Naive thymus-derived CD4-positive, alpha-beta T cell (primary cell): ENCODE measurements at regions of chr4 and their contacts with region 1.

Region 1: DNA sequence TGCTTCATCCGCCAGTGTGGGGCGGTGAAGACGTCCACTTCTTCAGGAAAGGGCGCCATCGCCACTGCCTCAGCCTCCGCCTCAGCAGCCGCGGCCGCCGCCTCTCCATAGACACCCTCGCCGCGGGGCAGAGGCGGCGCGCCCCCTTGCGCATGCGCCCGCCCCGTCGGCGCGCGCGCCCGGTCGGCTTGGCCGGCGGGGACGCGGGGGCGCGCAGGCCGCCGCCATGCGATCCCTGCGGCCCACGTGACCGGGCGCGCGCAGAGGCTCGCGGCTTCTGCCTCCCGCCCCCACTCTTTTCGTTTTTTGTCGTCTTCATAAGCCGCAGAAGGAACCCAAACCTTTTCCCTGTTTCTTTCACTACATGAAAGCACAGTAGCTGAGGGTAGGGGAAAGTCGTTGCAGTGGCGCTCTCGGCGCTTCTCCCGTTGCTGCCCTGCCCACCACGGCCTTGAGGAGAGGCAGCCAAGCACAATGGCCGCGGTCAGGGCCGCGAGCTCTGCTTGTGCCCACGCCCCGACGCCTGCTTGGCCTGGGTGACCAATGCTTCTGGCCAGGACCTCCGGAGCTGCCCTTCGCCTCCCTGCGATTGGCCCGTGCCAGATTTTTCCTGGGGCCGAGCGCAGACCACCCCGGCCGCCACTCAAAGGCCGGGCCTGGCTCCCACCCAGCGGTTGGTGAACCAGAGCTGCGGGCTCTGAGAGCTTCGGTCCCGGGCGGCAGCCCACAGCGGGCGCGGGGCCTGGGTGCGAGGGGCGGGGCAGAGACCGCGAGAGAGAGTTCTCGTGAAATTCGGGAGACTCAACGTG is at the start of gene FBXL5:
- DNase-seq: peak; percentile 77 to 92 (median 87)
- ATAC-seq: peak; percentile 92
- H3K4me3 ChIP-seq: peak within 1 kb of the TSS; percentile 87
- H3K4me3 Mint-ChIP-seq: peak within 1 kb of the TSS; percentile 94 to 100 (median 97)
- H3K27ac ChIP-seq: peak within 1 kb of the TSS; percentile 90
- H3K27ac Mint-ChIP-seq: peak within 1 kb of the TSS; percentile 90 to 98 (median 98)
- H3K4me1 ChIP-seq: peaks cover 29% of the 10 kb centered on the region in 2 donors
- H3K4me1 Mint-ChIP-seq: peaks cover 21 to 49% (median 45%) of the 10 kb centered on the region in 7 donors
- H3K27me3 ChIP-seq: no peaks in the 10 kb centered on the region
- H3K27me3 Mint-ChIP-seq: peaks cover 0 to 2% (median 0%) of the 10 kb centered on the region in 5 donors
- total RNA-seq, gene FBXL5: 39.1 to 107 (median 57.4) TPM

Region 2: DNA sequence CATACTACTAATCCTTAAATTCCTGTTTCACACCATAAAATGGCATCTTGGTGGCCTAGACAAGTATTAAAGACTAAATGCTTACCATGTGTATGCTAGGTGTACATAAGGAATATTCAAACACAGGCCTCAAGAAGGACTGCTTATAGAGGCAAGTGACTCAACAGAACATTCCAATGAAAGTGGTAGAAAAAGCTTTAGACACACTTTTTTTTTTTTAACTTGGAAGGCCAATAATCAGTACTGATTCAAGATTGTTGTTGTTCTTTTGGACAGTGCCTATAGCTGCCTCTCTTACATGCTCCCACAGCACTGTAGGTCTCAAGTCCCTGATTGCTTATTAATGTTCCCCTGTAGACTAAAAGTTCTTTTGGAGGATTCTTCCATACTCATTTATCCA is 77.9 kb before region 1 on chr4:
- CTCF ChIA-PET with region 1: no interaction called
- POLR2A ChIA-PET with region 1: no interaction called
- intact Hi-C with region 1: no loop called
- DNase-seq: no peak
- ATAC-seq: no peak
- H3K4me3 ChIP-seq: no peak overlapping the region
- H3K4me3 Mint-ChIP-seq: no peak overlapping the region
- H3K27ac ChIP-seq: no peak overlapping the region
- H3K27ac Mint-ChIP-seq: no peak overlapping the region
- H3K4me1 ChIP-seq: no peaks in the 10 kb centered on the region
- H3K4me1 Mint-ChIP-seq: peaks cover 0 to 4% (median 0%) of the 10 kb centered on the region in 7 donors
- H3K27me3 ChIP-seq: no peaks in the 10 kb centered on the region
- H3K27me3 Mint-ChIP-seq: no peaks in the 10 kb centered on the region

Region 3: DNA sequence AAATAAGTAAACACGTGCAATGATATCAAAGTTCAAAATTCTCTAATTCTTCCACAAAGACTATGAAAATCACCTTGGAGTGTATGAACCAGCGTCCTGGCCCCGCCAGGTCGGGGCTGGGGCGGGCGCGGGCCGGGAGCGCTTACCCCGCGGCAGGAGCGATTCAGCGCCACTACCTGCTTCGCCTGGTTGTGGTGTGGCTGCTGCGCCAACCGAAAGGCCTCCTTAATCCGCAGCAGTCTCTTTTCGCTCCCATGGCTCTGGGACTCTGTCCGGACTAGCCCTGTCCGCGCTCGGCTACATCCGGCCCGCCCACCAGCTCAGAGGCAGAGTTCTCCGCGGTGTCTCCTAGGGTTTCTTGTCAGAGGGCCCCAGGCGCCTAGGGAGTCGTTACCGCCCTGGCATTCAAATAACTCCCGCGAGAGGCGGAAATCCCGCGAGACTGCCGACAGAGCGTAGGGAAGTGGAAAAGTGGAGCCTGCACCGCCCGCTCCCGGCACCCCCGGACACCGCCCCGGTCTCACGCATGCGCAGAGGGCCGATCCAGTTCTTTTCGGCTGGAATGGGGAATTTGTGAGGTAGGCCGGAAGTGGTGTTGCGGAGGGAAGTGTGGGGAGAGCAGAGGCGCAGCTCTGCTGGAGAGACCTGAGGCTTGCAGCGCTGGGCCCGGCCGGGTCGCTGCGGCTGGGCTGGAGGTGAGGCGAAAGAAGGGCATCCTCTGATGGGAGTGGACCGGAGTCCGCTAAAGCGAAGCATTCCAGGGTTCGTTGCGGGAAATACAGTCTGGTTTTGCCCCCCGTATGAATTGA is 26.0 kb after region 1 on chr4 and contains the start of gene FAM200B:
- CTCF ChIA-PET with region 1: interaction called, 3 read pairs
- POLR2A ChIA-PET with region 1: interaction called, 44 read pairs
- intact Hi-C with region 1: loop called (anchors 1 kb)
- DNase-seq: peak; percentile 87 to 100 (median 93)
- ATAC-seq: peak; percentile 98
- H3K4me3 ChIP-seq: peak within 1 kb of the TSS; percentile 78
- H3K4me3 Mint-ChIP-seq: peak within 1 kb of the TSS; percentile 88 to 99 (median 94)
- H3K27ac ChIP-seq: peak within 1 kb of the TSS; percentile 94
- H3K27ac Mint-ChIP-seq: peak within 1 kb of the TSS; percentile 89 to 100 (median 98)
- H3K4me1 ChIP-seq: peaks cover 5 to 11% of the 10 kb centered on the region in 2 donors
- H3K4me1 Mint-ChIP-seq: peaks cover 22 to 54% (median 42%) of the 10 kb centered on the region in 7 donors
- H3K27me3 ChIP-seq: no peaks in the 10 kb centered on the region
- H3K27me3 Mint-ChIP-seq: no peaks in the 10 kb centered on the region
- total RNA-seq, gene FAM200B: 10.6 to 42.8 (median 27.4) TPM

Region 4: GRCh38 chr4:16278178-16278577 is 622.7 kb after region 1 on chr4:
- CTCF ChIA-PET with region 1: no interaction called
- POLR2A ChIA-PET with region 1: no interaction called
- intact Hi-C with region 1: no loop called
- DNase-seq: no peak
- ATAC-seq: no peak
- H3K4me3 ChIP-seq: no peak overlapping the region
- H3K4me3 Mint-ChIP-seq: no peak overlapping the region
- H3K27ac ChIP-seq: no peak overlapping the region
- H3K27ac Mint-ChIP-seq: no peak overlapping the region
- H3K4me1 ChIP-seq: no peaks in the 10 kb centered on the region
- H3K4me1 Mint-ChIP-seq: no peaks in the 10 kb centered on the region
- H3K27me3 ChIP-seq: peaks cover 0 to 4% of the 10 kb centered on the region in 2 donors
- H3K27me3 Mint-ChIP-seq: peaks cover 6 to 32% (median 22%) of the 10 kb centered on the region in 5 donors